ENCODE measurements at regions of chr2 and their contacts with region 1.

Region 1: DNA sequence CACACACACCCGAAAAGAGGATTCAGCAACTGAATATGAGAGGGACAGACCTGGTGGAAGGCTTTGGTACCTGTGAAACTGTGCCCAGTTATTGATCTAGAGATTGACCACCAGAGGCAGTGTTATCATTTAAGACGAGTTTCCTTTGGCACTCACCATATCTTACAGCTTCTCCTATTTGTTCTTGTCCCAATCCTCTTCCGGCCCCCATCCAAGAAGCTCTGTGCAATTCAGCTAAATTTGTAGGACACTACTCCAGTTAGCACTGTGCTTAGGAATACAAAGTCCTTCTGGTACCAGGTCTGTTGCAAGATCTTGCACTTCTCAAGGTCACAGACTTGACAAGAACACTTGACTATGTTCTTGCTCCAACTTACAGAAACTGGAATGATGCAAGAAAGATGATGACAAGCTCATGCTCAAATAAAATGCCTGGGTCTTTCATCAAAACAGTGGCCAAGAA is 177.7 kb downstream of the TMEM247 start:
- DNase-seq: no peak
- ATAC-seq: peak; percentile 66
- H3K4me3 Mint-ChIP-seq: no peak overlapping the region
- H3K27ac Mint-ChIP-seq: no peak overlapping the region
- H3K4me1 Mint-ChIP-seq: no peaks in the 10 kb centered on the region
- H3K27me3 Mint-ChIP-seq: peaks cover 7% of the 10 kb centered on the region

Region 2: GRCh38 chr2:46776687-46777327 is 119.7 kb after region 1 on chr2:
- CTCF ChIA-PET with region 1: interaction called, 6 read pairs
- POLR2A ChIA-PET with region 1: no interaction called
- intact Hi-C with region 1: loop called (anchors 1 kb)
- DNase-seq: peak; percentile 78
- ATAC-seq: no peak
- H3K4me3 Mint-ChIP-seq: no peak overlapping the region
- H3K27ac Mint-ChIP-seq: no peak overlapping the region
- H3K4me1 Mint-ChIP-seq: peaks cover 2% of the 10 kb centered on the region
- H3K27me3 Mint-ChIP-seq: peaks cover 1% of the 10 kb centered on the region

Region 3: DNA sequence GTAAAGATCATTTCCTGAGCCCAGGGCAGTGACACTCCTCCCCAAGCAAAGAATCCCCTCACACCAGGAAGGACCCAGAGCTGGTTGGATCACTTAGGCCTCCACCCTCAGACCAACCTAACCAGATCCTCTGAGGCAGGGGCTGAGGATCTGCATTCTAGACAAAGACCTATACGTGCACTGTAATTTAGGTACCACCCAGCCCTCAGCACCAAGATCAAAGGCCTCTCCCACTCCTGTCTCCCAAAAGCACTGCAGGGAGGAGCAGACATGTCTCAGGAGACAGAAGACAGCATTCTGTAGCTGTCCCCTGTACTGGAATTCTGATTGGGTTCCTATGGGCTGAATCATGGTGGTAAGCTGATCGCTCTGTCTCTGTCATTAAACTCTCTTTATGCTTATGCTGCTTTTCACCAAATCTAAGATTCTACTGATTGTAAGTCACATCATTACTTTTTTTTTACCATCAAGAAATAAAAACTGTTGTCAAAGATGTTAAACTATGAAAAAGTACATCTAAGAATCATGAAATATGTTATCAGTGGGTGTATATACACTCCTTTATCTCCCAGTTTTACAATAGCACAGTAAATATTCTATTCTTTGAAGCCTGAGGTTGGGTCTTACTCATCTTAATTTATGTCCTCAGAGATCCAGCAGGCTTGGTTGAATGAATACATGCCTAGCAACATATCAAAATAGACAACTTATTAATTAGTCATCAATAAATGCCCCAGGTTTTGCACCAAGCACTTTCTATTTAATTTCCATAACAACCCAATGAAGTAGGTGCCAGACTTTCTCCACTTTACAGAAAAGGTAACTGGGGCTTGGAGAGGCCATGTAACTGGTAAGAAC is 230.2 kb after region 1 on chr2:
- CTCF ChIA-PET with region 1: interaction called, 9 read pairs
- POLR2A ChIA-PET with region 1: no interaction called
- intact Hi-C with region 1: loop called in 1 of 2 experiments (anchors 5 kb)
- DNase-seq: no peak
- ATAC-seq: peak; percentile 27
- H3K4me3 Mint-ChIP-seq: no peak overlapping the region
- H3K27ac Mint-ChIP-seq: peak overlapping the region; percentile 15
- H3K4me1 Mint-ChIP-seq: peaks cover 12% of the 10 kb centered on the region
- H3K27me3 Mint-ChIP-seq: peaks cover 5% of the 10 kb centered on the region

Measured in activated CD4-positive, alpha-beta T cell treated with anti-CD3 and anti-CD28 coated beads for 36 hours (primary cell).